ENCODE measurements at regions of chr12 and their contacts with region 1.

Region 1: DNA sequence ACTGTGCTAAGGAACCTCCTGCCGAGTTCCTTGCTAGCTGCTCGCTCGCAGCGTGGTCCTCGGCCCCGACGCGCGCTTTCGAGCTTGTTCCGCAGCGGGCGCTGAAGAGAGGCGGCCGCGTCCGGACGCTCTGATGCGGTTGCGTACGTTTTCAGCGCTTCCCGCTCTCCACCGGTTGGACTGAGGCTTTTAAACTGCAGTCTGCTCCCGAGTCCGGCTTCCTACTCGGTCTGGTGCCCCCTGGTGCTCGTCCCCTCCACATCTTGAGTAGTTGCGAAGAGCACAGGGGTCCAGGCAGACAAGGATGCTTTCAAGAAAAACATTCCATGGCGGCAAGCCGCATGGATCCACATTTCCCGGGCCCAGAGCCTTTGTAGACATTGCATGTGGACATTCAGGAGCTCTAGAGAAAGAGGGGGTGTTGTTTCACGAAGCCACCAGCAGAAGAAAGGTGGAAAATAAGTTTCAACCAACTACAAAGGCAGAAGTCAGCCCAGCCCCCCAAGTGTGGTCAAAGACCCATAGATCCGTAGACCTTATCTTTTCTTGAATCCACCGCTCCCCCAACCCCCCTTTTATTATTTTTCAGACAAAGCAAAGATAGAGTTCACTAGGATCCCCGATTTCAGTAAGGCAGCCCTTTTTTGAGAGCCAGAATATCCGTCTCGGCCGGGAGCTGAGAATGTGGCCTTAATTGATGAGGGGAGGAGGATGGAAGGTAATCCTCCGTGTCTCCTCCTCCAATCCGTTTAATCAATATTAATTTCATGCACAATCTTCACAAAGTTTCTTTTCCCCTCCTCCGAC is 984 bp upstream of the WNK1 start:
- DNase-seq: peak; percentile 94
- H3K4me3 Mint-ChIP-seq: no peak overlapping the region
- H3K27ac Mint-ChIP-seq: no peak overlapping the region
- H3K4me1 Mint-ChIP-seq: peaks cover 23% of the 10 kb centered on the region
- H3K27me3 Mint-ChIP-seq: no peaks in the 10 kb centered on the region

Region 2: GRCh38 chr12:389139-390096 is 362.0 kb before region 1 on chr12 and contains the start of gene KDM5A:
- CTCF ChIA-PET with region 1: no interaction called
- intact Hi-C with region 1: loop called (anchors 10 kb)
- DNase-seq: peak; percentile 94
- H3K4me3 Mint-ChIP-seq: peak within 1 kb of the TSS; percentile 96
- H3K27ac Mint-ChIP-seq: peak within 1 kb of the TSS; percentile 98
- H3K4me1 Mint-ChIP-seq: peaks cover 37% of the 10 kb centered on the region
- H3K27me3 Mint-ChIP-seq: no peaks in the 10 kb centered on the region
- total RNA-seq, gene KDM5A: 59.0 to 61.3 TPM

Region 3: DNA sequence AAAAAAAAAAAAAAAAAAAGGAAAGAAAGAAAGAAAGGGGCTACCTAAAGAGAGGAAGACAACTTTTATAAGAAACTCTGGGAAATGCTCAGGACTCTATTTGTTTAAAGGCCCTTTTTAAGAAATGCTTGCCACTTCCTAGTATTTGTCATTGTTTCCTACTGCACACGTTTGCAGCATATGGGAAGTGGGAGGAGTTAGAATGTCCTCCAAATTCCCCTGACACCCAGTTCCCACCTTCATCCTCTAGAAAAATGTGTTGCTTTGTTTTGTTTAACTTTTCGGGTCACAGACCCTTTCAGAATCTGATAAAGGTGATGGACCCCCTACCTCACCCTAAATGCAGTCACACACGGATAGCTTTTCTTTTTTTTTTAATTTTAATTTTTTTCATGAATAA is 129.0 kb before region 1 on chr12:
- CTCF ChIA-PET with region 1: interaction called, 58 read pairs
- intact Hi-C with region 1: loop called (anchors 1 kb)
- DNase-seq: peak; percentile 57
- H3K4me3 Mint-ChIP-seq: peak overlapping the region; percentile 10
- H3K27ac Mint-ChIP-seq: peak overlapping the region; percentile 81
- H3K4me1 Mint-ChIP-seq: peaks cover 43% of the 10 kb centered on the region
- H3K27me3 Mint-ChIP-seq: no peaks in the 10 kb centered on the region

Region 4: GRCh38 chr12:674272-674781 is 77.1 kb before region 1 on chr12:
- CTCF ChIA-PET with region 1: interaction called, 28 read pairs
- intact Hi-C with region 1: loop called (anchors 1 kb)
- DNase-seq: peak; percentile 91
- H3K4me3 Mint-ChIP-seq: peak overlapping the region; percentile 16
- H3K27ac Mint-ChIP-seq: peak overlapping the region; percentile 78
- H3K4me1 Mint-ChIP-seq: peaks cover 65% of the 10 kb centered on the region
- H3K27me3 Mint-ChIP-seq: no peaks in the 10 kb centered on the region

Region 5: GRCh38 chr12:772056-772697 is 20.8 kb after region 1 on chr12:
- CTCF ChIA-PET with region 1: interaction called, 4 read pairs
- intact Hi-C with region 1: loop called (anchors 2 kb)
- DNase-seq: no peak
- H3K4me3 Mint-ChIP-seq: no peak overlapping the region
- H3K27ac Mint-ChIP-seq: no peak overlapping the region
- H3K4me1 Mint-ChIP-seq: peaks cover 71% of the 10 kb centered on the region
- H3K27me3 Mint-ChIP-seq: no peaks in the 10 kb centered on the region

Region 6: GRCh38 chr12:949453-950191 is 198.2 kb after region 1 on chr12 and contains the start of gene RAD52:
- CTCF ChIA-PET with region 1: interaction called, 4 read pairs
- intact Hi-C with region 1: loop called (anchors 1 kb)
- DNase-seq: peak; percentile 98
- H3K4me3 Mint-ChIP-seq: peak within 1 kb of the TSS; percentile 93
- H3K27ac Mint-ChIP-seq: peak within 1 kb of the TSS; percentile 96
- H3K4me1 Mint-ChIP-seq: peaks cover 34% of the 10 kb centered on the region
- H3K27me3 Mint-ChIP-seq: no peaks in the 10 kb centered on the region
- total RNA-seq, gene RAD52: 15.6 to 17.9 TPM

Region 7: GRCh38 chr12:1391722-1392121 is 640.3 kb after region 1 on chr12:
- CTCF ChIA-PET with region 1: no interaction called
- intact Hi-C with region 1: no loop called
- DNase-seq: no peak
- H3K4me3 Mint-ChIP-seq: no peak overlapping the region
- H3K27ac Mint-ChIP-seq: no peak overlapping the region
- H3K4me1 Mint-ChIP-seq: no peaks in the 10 kb centered on the region
- H3K27me3 Mint-ChIP-seq: no peaks in the 10 kb centered on the region

Region 8: DNA sequence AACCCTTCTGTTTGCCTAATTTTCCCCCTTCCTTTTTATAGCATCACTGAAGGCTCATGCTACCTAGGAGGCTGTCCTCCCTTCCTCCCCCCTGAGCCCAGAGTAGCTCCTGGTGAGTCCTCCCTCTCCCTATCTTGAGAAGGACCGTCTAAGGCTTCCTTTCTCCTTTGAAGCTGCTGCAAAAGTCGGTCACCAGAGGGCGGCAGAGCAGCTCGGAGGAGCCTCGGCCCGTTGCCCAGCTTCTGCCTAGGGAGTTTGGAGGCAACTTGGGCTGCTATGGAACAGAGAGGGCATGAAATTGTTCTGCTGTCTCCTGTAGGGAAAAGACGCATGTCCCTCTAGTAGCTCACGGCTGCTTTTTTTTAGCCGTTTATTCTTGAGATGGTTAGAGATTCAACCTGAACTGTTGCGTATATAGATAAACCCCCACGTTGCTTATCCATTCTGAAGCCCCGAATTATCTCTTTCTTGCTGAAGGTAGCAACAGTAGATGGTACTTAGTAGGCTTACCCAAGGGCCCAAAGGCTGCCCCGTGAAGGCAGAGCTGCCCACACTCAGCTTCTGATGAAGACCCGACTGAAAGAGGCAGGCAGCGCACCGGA is 883.3 kb after region 1 on chr12:
- CTCF ChIA-PET with region 1: no interaction called
- intact Hi-C with region 1: no loop called
- DNase-seq: peak; percentile 76
- H3K4me3 Mint-ChIP-seq: no peak overlapping the region
- H3K27ac Mint-ChIP-seq: no peak overlapping the region
- H3K4me1 Mint-ChIP-seq: peaks cover 9% of the 10 kb centered on the region
- H3K27me3 Mint-ChIP-seq: peaks cover 32% of the 10 kb centered on the region